Naive thymus-derived CD4-positive, alpha-beta T cell (primary cell): ENCODE measurements at regions of chr6 and their contacts with region 1.

Region 1: DNA sequence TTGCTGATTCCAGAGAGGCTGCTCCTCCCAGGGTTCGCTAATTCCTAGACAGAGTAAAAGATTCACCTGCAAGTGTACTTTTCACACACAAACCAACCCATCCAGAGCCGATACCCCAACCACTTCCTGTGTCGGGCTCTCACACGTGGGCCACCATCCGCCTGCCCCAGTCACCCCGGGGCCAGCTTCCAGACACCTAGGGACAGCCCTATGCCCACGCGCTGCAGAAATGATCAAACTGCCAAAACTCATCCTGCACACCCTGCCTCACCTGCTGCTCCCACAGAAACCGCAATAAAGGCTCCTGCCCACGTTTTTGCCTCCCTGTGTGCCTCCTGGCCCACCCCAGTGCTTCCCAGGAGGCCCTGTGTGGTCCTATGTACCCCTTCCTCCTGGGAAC is 59.5 kb downstream of the PSMG4 start:
- DNase-seq: peak in 8 of 9 donors; percentile 28 to 61 (median 50)
- ATAC-seq: peak; percentile 82
- H3K4me3 ChIP-seq: peak overlapping the region; percentile 36
- H3K4me3 Mint-ChIP-seq: peak overlapping the region; percentile 3 to 83 (median 73)
- H3K27ac ChIP-seq: no peak overlapping the region
- H3K27ac Mint-ChIP-seq: peak overlapping the region in 7 of 9 donors; percentile 53 to 82 (median 66)
- H3K4me1 ChIP-seq: peaks cover 7 to 24% of the 10 kb centered on the region in 2 donors
- H3K4me1 Mint-ChIP-seq: peaks cover 12 to 38% (median 30%) of the 10 kb centered on the region in 7 donors
- H3K27me3 ChIP-seq: no peaks in the 10 kb centered on the region
- H3K27me3 Mint-ChIP-seq: peaks cover 0 to 18% (median 0%) of the 10 kb centered on the region in 5 donors

Region 2: DNA sequence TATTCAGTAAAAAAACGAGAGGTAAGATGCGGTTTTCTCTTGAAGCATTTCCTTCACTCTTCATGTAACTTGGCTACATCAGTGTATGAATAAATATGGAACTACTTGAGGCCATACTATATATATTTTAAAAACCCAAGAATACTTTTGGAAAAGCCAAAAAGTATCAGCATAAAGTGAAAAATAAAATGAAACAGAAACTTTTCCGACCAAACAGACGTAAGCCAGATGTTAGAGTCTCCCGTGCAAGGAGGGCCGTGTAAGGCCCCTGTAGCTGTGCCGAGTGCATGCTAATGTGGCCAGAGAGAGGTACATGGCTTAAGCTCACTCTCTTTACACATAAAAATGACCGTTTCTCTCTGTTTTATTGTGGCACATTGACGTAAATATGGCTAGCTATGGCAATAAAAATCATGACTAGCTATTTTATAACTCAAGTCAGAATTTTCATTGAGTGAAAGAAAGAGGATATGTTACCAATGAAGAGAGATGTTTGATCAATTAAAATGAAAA is 932.7 kb before region 1 on chr6:
- CTCF ChIA-PET with region 1: no interaction called
- POLR2A ChIA-PET with region 1: no interaction called
- intact Hi-C with region 1: no loop called
- DNase-seq: no peak
- ATAC-seq: no peak
- H3K4me3 ChIP-seq: no peak overlapping the region
- H3K4me3 Mint-ChIP-seq: no peak overlapping the region
- H3K27ac ChIP-seq: no peak overlapping the region
- H3K27ac Mint-ChIP-seq: no peak overlapping the region
- H3K4me1 ChIP-seq: no peaks in the 10 kb centered on the region
- H3K4me1 Mint-ChIP-seq: no peaks in the 10 kb centered on the region
- H3K27me3 ChIP-seq: no peaks in the 10 kb centered on the region
- H3K27me3 Mint-ChIP-seq: no peaks in the 10 kb centered on the region

Region 3: DNA sequence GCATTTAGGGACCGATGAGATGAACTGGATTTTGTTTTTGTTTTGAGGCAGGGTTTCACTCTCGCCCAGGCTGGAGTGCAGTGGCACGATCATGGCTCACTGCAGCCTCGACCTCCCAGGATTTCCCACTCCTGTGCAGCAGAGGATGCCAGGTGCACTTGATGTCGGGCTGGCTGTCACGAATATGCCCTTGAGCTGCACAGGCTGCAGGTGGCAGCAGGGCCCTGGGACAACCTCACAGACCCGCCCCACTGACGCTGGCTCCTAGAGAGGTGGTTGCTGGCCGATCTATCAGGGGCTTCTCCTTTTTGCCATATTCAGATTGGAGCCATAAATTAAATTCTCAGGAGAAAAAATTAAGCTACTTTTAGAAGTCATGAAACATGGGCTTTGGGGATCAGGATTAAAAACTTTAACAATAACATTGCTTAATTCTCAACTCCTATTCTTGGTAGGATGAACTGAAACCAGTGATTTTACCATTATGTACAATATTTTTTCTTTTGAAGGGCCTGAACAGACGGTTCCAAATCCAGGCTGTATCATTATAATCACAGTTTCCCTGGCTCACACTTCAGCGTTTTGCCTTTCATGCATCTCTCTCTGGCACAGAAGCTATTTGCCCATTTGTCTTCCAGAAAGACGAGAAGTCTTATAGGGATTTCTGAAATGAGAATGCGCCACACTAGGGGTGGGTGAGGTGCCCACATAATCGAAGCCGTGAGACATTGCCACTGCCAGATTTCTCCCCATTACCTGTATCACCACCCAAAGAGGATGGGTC is 286.2 kb before region 1 on chr6:
- CTCF ChIA-PET with region 1: no interaction called
- POLR2A ChIA-PET with region 1: no interaction called
- intact Hi-C with region 1: no loop called
- DNase-seq: peak in 4 of 9 donors; percentile 18 to 43 (median 36)
- ATAC-seq: peak; percentile 61
- H3K4me3 ChIP-seq: no peak overlapping the region
- H3K4me3 Mint-ChIP-seq: no peak overlapping the region
- H3K27ac ChIP-seq: no peak overlapping the region
- H3K27ac Mint-ChIP-seq: no peak overlapping the region
- H3K4me1 ChIP-seq: peaks cover 5% of the 10 kb centered on the region in 2 donors
- H3K4me1 Mint-ChIP-seq: peaks cover 3 to 25% (median 14%) of the 10 kb centered on the region in 7 donors
- H3K27me3 ChIP-seq: no peaks in the 10 kb centered on the region
- H3K27me3 Mint-ChIP-seq: peaks cover 0 to 47% (median 0%) of the 10 kb centered on the region in 5 donors

Region 4: DNA sequence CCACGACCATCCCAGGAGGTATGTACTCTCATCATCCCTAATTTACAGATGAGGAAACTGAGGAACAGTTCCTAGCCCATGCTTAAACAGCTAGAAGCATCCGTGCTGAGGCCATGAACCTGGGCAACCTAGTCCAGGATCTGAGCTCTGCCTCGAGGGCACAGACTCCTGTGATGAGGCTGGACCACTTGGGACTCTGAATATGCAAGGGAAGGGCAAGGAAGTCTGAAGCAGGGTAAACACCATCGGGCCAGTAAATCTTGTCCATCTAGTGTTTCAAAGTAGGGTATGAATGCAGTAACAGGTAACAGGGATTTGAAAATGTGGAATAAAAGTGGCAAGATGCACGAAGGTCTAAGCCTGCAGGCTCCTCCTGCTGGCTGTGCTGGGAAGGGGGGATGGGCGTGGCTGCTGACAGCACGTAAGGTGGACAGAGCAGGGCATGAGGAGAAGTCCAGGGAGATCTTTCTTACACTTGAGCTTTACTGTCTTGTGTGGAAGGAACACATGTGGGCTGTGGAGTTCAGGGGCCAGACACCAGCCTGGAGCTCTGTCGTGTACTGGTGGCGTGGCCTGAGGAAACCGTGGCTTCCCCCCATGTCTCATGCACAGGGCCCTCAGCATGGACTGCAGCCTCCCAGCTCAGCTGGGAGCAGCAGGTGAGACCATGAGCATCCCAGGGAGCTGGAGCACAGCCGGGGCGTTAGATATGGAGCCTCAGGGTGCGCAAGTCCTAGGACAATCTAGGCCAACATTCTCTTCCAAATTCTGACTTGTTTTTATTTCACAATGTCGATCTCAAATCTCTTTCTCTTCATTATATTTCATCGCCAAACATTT is 54.0 kb after region 1 on chr6:
- CTCF ChIA-PET with region 1: no interaction called
- POLR2A ChIA-PET with region 1: no interaction called
- intact Hi-C with region 1: loop called in 1 of 2 experiments (anchors 5 kb)
- DNase-seq: no peak
- ATAC-seq: no peak
- H3K4me3 ChIP-seq: no peak overlapping the region
- H3K4me3 Mint-ChIP-seq: peak overlapping the region in 1 of 10 donors; percentile 24
- H3K27ac ChIP-seq: no peak overlapping the region
- H3K27ac Mint-ChIP-seq: peak overlapping the region in 7 of 9 donors; percentile 48 to 98 (median 89)
- H3K4me1 ChIP-seq: peaks cover 6 to 22% of the 10 kb centered on the region in 2 donors
- H3K4me1 Mint-ChIP-seq: peaks cover 5 to 66% (median 52%) of the 10 kb centered on the region in 7 donors
- H3K27me3 ChIP-seq: no peaks in the 10 kb centered on the region
- H3K27me3 Mint-ChIP-seq: peaks cover 0 to 2% (median 0%) of the 10 kb centered on the region in 5 donors